ENCODE measurements at regions of chr7 and their contacts with region 1.

Region 1: DNA sequence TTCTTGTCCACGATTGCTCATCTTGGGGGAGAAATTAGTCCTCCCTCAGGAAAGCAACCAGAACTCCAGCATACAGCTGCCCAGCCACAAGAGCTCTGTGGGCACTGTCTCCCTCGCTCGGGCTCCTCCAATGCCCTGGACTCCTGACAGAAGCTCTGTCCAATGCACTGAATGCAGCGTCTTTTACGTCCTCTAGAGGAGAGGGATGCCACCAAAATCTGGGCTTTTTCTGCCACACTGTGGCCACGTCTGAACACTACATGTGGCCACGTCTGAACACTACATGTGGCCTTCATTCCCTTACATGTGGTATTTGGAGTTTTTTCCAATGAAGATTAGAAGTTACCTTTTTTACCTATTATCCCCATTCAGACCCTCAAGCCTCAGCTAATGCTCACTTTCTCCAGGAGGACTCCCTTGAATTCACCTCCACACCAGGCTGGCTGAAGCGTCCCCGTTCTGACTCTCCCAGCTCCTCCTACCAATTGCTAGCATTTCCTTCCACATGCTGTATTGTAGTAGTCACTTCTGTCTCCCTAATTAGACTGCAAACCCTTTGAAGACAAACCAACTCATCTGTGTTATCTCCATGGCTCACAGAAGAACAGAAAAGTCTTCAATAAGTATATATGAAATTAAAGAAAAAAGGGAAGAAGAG is 134.3 kb upstream of the PDE1C start:
- ATAC-seq: peak; percentile 82 to 100 (median 98)
- H3K4me3 ChIP-seq: no peak overlapping the region
- H3K27ac ChIP-seq: no peak overlapping the region
- H3K4me1 ChIP-seq: no peaks in the 10 kb centered on the region

Region 2: GRCh38 chr7:31443457-31443856 is 761.0 kb before region 1 on chr7:
- in situ Hi-C with region 1: loop called in 1 of 9 experiments (anchors 25 kb)
- ATAC-seq: peak; percentile 44 to 78 (median 68)
- H3K4me3 ChIP-seq: no peak overlapping the region
- H3K27ac ChIP-seq: no peak overlapping the region
- H3K4me1 ChIP-seq: no peaks in the 10 kb centered on the region

Region 3: DNA sequence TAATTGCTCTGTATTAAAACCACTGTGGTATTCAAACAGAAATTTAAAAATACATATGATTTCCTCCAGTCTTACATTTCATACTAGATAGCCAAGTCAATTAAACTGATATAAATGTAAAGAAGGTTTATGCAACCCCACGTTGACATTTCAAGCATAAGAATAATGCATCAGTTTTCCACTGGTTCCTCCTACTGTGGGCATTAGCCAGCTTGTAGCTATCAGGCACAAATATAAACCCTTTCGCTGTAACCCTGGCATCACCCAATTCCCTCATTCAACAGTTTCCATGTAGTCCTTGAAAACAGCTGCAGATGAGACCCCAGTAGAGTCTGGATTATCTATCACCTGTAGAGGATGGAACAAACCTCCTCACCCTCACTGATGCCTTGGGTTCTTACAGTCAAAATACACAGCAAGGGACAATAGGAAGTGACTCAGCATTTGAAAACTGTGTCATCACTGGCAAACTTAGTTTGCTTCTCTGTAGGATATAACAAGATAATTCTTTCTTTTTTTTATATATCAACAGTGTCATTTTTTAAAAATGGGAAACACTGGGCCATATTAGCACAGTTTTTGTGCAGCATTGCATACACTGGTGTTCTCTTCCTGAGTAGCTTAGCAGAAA is 247.3 kb before region 1 on chr7:
- in situ Hi-C with region 1: no loop called
- ATAC-seq: peak in 2 of 8 experiments; percentile 8 to 31
- H3K4me3 ChIP-seq: no peak overlapping the region
- H3K27ac ChIP-seq: no peak overlapping the region
- H3K4me1 ChIP-seq: peaks cover 7% of the 10 kb centered on the region in 2 donors

Region 4: DNA sequence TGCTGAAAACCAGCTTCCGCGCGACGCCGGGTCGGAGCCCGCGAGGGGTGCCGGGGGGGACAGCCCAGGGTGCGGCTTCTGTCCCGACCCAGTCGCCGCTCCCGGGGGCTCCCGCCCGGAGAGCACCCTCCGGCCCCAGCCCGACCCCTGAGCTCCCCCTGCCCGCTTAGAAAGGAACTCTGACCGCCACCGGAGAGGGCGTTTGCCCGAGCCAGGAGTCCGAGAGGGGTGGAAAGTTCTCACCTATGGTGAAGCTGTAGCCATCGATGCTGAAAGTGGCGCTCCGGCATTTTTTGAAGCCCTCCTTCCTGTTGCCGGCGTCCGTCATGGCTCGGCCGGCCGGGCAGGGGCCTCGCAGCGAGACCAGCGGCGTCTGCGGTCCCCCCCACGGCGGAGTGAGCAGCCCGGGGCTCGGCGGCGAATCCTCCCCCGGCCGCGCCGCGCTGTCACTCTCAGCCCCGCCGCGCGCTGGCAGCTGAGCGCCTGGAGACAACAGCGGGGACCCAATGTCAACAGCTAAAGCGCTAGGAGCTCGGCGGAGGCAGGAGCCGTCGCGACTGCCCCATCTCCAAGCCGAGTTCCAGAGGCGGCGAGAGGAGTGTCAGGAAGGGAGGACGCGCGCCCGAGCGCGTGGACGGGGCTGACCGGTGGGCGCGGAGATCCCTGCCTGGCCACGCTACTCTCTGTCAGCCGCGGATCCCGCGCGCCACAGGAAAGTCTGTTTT is 94.1 kb after region 1 on chr7:
- in situ Hi-C with region 1: no loop called
- ATAC-seq: peak; percentile 65 to 87 (median 84)
- H3K4me3 ChIP-seq: peak overlapping the region; percentile 36 to 43 (median 40)
- H3K27ac ChIP-seq: no peak overlapping the region
- H3K4me1 ChIP-seq: peaks cover 3 to 5% of the 10 kb centered on the region in 2 donors

Region 5: DNA sequence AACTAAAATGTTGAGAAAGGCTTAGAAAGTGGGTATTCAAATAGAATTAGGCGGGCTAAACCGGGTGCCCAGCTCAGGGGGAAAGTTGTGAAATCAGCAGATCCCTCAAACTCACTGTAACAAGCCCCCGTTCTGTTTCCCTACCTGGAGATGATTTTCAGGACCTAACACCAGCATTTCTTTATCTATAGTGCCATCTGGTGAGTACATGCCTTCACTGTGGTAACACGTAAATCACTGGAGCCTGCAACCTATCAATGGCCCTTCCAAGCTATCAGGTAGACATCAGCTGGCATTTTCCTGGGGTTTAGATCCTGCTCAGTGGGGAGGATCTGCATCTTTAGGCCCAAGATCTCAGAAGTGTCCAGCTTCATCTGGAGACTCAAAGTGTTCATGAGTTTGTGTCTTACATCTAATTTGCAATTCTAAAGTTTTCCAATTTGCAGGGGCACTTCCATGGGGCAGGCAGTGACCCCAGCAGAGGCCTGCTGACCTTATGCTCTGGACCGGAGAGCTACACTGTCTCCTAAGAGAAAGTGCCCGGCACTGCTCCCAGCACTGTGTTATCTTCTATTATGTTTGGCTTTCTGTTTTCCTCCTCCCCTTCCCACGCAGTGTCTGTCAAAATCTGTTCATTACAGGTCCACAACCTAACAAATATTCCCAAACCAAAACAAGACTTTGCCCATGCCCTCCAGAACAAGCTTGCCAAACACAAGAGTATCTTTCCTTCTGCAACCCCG is 153.2 kb after region 1 on chr7:
- in situ Hi-C with region 1: loop called in 3 of 9 experiments (anchors 25 kb)
- ATAC-seq: peak in 3 of 8 experiments; percentile 72 to 84 (median 76)
- H3K4me3 ChIP-seq: no peak overlapping the region
- H3K27ac ChIP-seq: no peak overlapping the region
- H3K4me1 ChIP-seq: peaks cover 0 to 4% of the 10 kb centered on the region in 2 donors

Region 6: DNA sequence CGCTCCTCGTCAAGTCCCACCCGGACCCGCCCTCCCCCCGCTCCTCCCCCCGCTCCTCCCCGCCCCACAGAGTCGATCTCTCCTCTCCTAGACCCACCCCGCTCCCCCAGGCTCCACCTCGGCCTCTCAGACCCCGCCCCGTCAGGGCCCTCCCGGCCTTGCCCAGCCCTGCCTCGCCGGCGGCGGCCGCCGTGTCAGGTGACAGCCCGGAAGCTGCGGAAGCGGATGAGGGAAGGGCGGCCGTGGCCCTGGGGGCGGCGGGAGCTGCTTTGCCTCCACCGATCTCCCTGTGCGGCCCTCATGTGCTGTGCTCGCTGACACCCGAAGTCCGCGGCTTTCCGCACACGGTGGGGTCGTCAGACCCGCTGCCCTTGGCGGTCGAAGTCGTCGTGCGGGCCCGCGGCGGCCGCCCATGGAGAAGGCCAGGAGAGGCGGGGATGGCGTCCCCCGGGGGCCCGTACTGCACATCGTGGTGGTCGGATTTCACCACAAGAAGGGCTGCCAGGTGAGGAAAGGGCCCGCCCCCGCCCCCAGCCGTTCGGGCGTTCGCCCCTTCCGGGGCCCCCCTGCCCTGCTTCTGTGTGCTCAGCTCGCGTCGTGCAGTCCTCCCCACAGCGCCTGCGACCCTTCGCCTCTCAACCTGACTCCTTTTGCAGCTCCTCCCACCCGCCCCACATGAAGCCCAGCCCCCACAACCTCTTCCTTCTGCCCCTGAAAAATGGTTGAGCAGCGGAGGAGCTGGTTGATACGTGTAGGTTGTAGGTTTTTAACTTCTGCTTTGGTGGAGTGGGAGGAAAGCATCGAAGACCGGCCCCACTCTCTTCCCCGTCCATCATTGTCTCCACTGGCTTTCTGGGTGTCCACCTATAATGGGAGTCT is 291.0 kb after region 1 on chr7 and contains the start of gene AVL9:
- in situ Hi-C with region 1: loop called in 1 of 9 experiments (anchors 25 kb)
- ATAC-seq: peak; percentile 87 to 98 (median 96)
- H3K4me3 ChIP-seq: peak within 1 kb of the TSS; percentile 66 to 100 (median 94)
- H3K27ac ChIP-seq: peak within 1 kb of the TSS; percentile 95 to 98
- H3K4me1 ChIP-seq: peaks cover 3 to 8% of the 10 kb centered on the region in 2 donors
- total RNA-seq, gene AVL9: 21.3 to 38.4 (median 32.9) TPM

Measured in motor neuron (in vitro differentiated cells).